Sigmoid colon (tissue), 7 donors: ENCODE measurements at regions of chr2 and their contacts with region 1.

Region 1: DNA sequence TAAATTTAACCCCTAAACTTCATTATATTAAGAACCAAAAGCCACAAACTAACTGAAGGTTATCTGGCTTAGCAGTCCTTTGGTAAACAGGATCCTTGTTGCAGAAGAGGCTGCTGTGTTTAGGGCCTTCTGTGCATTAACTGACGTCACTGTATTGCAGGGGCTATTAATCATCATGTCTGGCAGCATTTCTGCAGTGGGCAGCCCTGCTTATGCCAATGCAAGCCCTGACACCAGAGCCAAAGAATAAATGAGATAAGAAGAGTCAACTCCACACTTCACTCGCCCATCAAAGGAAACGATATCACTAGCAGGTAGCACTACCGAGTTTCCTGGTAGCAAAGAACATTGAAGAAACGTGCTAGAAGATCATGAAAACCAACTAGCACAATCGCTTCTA is 110.6 kb downstream of the PLEKHM3 start:
- DNase-seq: no peak
- H3K4me3 ChIP-seq: no peak overlapping the region
- H3K27ac ChIP-seq: no peak overlapping the region
- H3K4me1 ChIP-seq: peaks cover 0 to 4% (median 0%) of the 10 kb centered on the region in 4 donors
- H3K27me3 ChIP-seq: no peaks in the 10 kb centered on the region
- CTCF ChIP-seq: no peak
- EP300 ChIP-seq: no peak
- POLR2A ChIP-seq: no peak

Region 2: GRCh38 chr2:207725873-207726578 is 188.7 kb before region 1 on chr2:
- intact Hi-C with region 1: no loop called
- DNase-seq: no peak
- H3K4me3 ChIP-seq: no peak overlapping the region
- H3K27ac ChIP-seq: no peak overlapping the region
- H3K4me1 ChIP-seq: no peaks in the 10 kb centered on the region
- H3K27me3 ChIP-seq: no peaks in the 10 kb centered on the region
- CTCF ChIP-seq: no peak
- EP300 ChIP-seq: no peak
- POLR2A ChIP-seq: no peak

Region 3: GRCh38 chr2:207847807-207848544 is 66.7 kb before region 1 on chr2:
- intact Hi-C with region 1: loop called (anchors 5 kb)
- DNase-seq: no peak
- H3K4me3 ChIP-seq: no peak overlapping the region
- H3K27ac ChIP-seq: peak overlapping the region; percentile 21 to 71 (median 48)
- H3K4me1 ChIP-seq: peaks cover 0 to 37% (median 22%) of the 10 kb centered on the region in 4 donors
- H3K27me3 ChIP-seq: no peaks in the 10 kb centered on the region
- CTCF ChIP-seq: no peak
- EP300 ChIP-seq: no peak
- POLR2A ChIP-seq: no peak